Dendritic cell treated with granulocyte-macrophage colony-stimulating factor and Interleukin-4, amounts not matched to agents 40 ng/mL and 50 ng/mL, for 4 days (primary cell): ENCODE measurements at regions of chr1 and their contacts with region 1.

Region 1: GRCh38 chr1:27284425-27285273 is 37.3 kb upstream of the TMEM222 start:
- H3K4me3 Mint-ChIP-seq: no peak overlapping the region
- H3K27ac Mint-ChIP-seq: no peak overlapping the region
- H3K4me1 Mint-ChIP-seq: no peaks in the 10 kb centered on the region
- H3K27me3 Mint-ChIP-seq: no peaks in the 10 kb centered on the region

Region 2: GRCh38 chr1:27044613-27045151 is 240.0 kb before region 1 on chr1:
- intact Hi-C with region 1: loop called (anchors 5 kb)
- H3K4me3 Mint-ChIP-seq: no peak overlapping the region
- H3K27ac Mint-ChIP-seq: no peak overlapping the region
- H3K4me1 Mint-ChIP-seq: peaks cover 11% of the 10 kb centered on the region
- H3K27me3 Mint-ChIP-seq: peaks cover 28% of the 10 kb centered on the region

Region 3: GRCh38 chr1:27102707-27103491 is 181.8 kb before region 1 on chr1:
- intact Hi-C with region 1: loop called (anchors 1 kb)
- H3K4me3 Mint-ChIP-seq: no peak overlapping the region
- H3K27ac Mint-ChIP-seq: no peak overlapping the region
- H3K4me1 Mint-ChIP-seq: peaks cover 64% of the 10 kb centered on the region
- H3K27me3 Mint-ChIP-seq: no peaks in the 10 kb centered on the region

Region 4: GRCh38 chr1:27201295-27201694 is 83.4 kb before region 1 on chr1:
- intact Hi-C with region 1: loop called (anchors 1 kb)
- H3K4me3 Mint-ChIP-seq: no peak overlapping the region
- H3K27ac Mint-ChIP-seq: no peak overlapping the region
- H3K4me1 Mint-ChIP-seq: peaks cover 19% of the 10 kb centered on the region
- H3K27me3 Mint-ChIP-seq: peaks cover 14% of the 10 kb centered on the region

Region 5: GRCh38 chr1:27269276-27269675 is 15.4 kb before region 1 on chr1:
- intact Hi-C with region 1: no loop called
- H3K4me3 Mint-ChIP-seq: no peak overlapping the region
- H3K27ac Mint-ChIP-seq: no peak overlapping the region
- H3K4me1 Mint-ChIP-seq: peaks cover 5% of the 10 kb centered on the region
- H3K27me3 Mint-ChIP-seq: no peaks in the 10 kb centered on the region

Region 6: DNA sequence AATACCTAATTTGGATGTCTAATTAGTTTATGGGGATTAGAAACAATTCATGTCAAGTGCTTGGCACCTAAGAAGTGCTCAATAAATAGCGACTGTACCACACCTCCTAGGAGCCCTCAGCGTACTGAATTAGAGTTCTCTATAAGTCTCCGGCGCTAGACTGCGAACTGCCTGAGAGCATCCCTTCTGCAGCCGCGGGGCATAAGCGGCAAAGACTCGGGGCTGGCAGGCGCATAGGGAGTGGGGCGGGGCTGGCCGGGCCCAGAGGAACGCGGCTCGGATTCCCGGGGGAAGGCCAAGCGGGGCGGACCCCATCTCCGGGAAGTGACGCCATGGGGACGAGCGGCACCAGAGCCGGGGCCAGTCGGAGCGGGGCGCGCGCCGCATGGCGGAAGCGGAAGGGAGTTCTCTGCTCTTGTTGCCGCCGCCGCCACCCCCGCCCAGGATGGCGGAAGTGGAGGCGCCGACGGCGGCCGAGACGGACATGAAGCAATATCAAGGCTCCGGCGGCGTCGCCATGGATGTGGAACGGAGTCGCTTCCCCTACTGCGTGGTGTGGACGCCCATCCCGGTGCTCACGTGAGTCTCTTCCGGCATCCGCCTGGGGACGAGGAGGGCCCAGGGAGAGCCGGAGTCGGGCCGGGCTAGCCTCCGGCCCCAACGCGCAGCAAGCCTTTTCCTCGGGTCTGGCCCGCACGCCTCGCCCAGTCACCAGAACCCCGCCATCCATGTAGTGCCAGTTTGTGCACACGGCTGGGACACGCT is 37.3 kb after region 1 on chr1 and contains the start of gene TMEM222:
- intact Hi-C with region 1: no loop called
- H3K4me3 Mint-ChIP-seq: peak within 1 kb of the TSS; percentile 92
- H3K27ac Mint-ChIP-seq: peak within 1 kb of the TSS; percentile 94
- H3K4me1 Mint-ChIP-seq: peaks cover 45% of the 10 kb centered on the region
- H3K27me3 Mint-ChIP-seq: peaks cover 13% of the 10 kb centered on the region